BJ (cell line): ENCODE measurements at regions of chr15 and their contacts with region 1.

Region 1: DNA sequence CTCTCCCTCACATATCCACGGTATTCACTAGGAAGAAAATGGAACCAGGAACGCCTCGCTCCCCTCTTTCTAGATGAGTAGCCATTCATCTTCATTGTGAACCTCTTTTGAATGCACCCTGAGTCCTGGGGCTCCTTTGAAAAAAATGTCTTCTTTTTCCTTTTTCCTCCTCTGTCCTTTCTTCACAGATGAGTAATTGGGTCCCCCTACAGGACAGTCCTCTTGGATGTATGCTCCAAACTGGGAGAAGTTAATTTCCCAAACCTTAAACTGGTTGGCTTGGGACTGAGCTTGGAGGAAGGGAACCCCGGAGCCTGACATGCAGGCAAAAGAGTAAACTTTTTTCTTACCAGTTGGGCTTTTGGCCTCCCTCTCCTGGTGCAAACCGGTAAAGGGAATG is 108.8 kb downstream of the DPH6 start:
- DNase-seq: no peak
- H3K4me3 ChIP-seq: no peak overlapping the region
- H3K27me3 ChIP-seq: no peaks in the 10 kb centered on the region
- CTCF ChIP-seq: peak; percentile 43

Region 2: GRCh38 chr15:35289024-35289617 is 148.0 kb before region 1 on chr15:
- CTCF ChIA-PET with region 1: interaction called, 207 read pairs
- POLR2A ChIA-PET with region 1: no interaction called
- DNase-seq: no peak
- H3K4me3 ChIP-seq: no peak overlapping the region
- H3K27me3 ChIP-seq: no peaks in the 10 kb centered on the region
- CTCF ChIP-seq: peak; percentile 80

Region 3: DNA sequence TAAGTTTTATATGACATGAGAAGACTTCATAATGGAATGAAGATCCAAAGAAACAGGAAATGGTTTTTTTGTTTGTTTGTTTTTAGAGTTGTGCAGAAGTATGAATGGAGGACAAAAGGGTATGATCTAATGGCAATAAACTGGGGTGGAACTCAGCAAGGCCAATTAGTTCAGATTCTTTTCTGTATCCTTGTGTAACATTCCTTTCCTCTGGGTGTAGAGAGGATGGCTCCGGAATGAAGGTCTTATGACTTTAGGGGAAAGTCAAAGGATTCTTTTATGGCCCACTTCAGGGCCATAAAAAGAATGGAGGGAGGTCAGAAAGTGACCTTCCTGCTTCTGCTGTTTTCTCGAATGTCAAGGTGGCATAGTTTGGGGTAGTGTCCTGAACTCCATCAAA is 43.8 kb before region 1 on chr15:
- CTCF ChIA-PET with region 1: no interaction called
- POLR2A ChIA-PET with region 1: no interaction called
- DNase-seq: peak; percentile 44
- H3K4me3 ChIP-seq: no peak overlapping the region
- H3K27me3 ChIP-seq: no peaks in the 10 kb centered on the region
- CTCF ChIP-seq: no peak

Region 4: DNA sequence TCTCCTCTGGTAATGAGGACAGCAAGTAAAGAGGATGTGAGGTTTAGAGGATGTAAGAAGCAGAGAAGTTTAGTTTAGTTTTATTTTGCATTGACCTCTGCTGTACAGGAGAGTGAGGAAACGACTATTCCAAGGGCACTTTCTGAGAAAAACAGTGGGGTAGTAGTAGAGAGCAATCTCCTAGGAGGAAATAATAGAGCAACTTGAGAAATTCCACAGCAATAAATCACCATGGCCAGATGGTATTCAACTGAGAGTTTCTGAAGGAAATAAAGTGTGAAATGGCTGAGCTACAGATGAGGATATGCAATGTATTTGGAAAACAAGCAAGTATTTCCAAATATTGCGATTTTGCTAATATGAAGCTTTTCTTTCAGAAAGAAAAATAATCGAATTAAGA is 10.1 kb before region 1 on chr15:
- CTCF ChIA-PET with region 1: interaction called, 10 read pairs
- POLR2A ChIA-PET with region 1: no interaction called
- DNase-seq: peak; percentile 44
- H3K4me3 ChIP-seq: no peak overlapping the region
- H3K27me3 ChIP-seq: no peaks in the 10 kb centered on the region
- CTCF ChIP-seq: no peak